ENCODE measurements at regions of chrX and their contacts with region 1.

Region 1: DNA sequence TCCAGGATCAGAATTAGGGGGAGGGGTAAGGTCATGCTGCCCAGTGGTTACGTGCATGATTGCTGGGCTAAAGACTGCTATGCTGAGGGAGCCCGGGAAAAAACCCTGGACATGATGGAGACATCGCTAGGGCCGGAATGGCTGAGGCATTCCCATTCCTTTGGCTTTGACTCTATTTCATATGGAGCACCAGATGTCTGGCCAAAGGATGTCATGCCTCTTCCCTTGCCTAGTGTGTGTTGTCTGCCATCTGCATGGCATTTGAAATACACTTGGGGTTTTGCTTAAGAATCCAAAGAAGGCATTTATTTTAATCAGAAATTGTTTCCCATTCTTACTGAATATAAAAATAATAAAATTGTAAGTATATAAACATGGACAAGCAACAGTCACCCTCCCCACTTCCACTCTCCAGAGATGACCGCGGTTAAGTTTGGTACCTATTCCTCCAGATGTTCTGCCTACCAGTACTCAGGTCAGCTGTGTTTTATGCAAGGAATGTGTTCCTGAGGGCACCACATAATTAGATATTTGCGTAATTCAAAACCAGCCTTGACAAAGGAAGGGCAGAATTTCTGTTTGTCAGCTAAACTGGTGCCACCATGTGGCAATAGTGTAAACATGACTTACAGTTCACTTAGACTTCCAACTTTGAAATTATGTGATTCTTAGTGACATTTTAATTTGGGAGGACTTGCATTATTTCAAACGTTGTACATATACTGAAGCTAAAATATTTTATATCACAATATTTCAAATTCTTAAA is 105.9 kb downstream of the CT47B1 start:
- DNase-seq: peak; percentile 68
- H3K4me3 ChIP-seq: no peak overlapping the region
- H3K27ac ChIP-seq: no peak overlapping the region
- H3K4me1 ChIP-seq: peaks cover 12% of the 10 kb centered on the region
- CTCF ChIP-seq: peak; percentile 79

Region 2: GRCh38 chrX:120499301-120500072 is 270.3 kb before region 1 on chrX:
- CTCF ChIA-PET with region 1: no interaction called
- POLR2A ChIA-PET with region 1: no interaction called
- intact Hi-C with region 1: loop called (anchors 2 kb)
- DNase-seq: no peak
- H3K4me3 ChIP-seq: no peak overlapping the region
- H3K27ac ChIP-seq: no peak overlapping the region
- H3K4me1 ChIP-seq: no peaks in the 10 kb centered on the region
- CTCF ChIP-seq: no peak

Region 3: DNA sequence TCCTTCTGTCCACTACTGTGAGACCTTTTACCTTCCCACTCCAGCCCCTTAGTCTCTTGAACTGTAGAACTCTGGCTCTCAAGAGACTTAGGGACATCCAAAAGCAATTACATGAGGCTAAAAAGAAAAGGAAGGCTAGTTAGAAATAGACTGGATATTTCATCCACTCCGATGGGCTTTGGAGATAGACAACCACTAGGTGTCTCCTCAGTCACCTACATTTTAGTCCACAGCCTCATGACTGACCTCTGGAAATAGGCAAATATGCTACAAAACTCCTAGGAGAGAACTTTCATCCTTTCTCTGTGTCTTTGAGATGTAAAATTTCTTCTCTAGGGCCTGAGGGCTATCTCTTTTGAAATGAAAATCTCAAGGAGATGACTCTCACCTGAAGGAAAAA is 255.5 kb before region 1 on chrX:
- CTCF ChIA-PET with region 1: no interaction called
- POLR2A ChIA-PET with region 1: interaction called, 7 read pairs
- intact Hi-C with region 1: loop called (anchors 5 kb)
- DNase-seq: peak; percentile 45
- H3K4me3 ChIP-seq: no peak overlapping the region
- H3K27ac ChIP-seq: no peak overlapping the region
- H3K4me1 ChIP-seq: no peaks in the 10 kb centered on the region
- CTCF ChIP-seq: peak; percentile 77

Region 4: GRCh38 chrX:120797188-120797851 is 27.6 kb after region 1 on chrX:
- CTCF ChIA-PET with region 1: no interaction called
- POLR2A ChIA-PET with region 1: no interaction called
- intact Hi-C with region 1: no loop called
- DNase-seq: no peak
- H3K4me3 ChIP-seq: no peak overlapping the region
- H3K27ac ChIP-seq: no peak overlapping the region
- H3K4me1 ChIP-seq: peaks cover 8% of the 10 kb centered on the region
- CTCF ChIP-seq: no peak